ENCODE measurements at regions of chr17 and their contacts with region 1.

Region 1: DNA sequence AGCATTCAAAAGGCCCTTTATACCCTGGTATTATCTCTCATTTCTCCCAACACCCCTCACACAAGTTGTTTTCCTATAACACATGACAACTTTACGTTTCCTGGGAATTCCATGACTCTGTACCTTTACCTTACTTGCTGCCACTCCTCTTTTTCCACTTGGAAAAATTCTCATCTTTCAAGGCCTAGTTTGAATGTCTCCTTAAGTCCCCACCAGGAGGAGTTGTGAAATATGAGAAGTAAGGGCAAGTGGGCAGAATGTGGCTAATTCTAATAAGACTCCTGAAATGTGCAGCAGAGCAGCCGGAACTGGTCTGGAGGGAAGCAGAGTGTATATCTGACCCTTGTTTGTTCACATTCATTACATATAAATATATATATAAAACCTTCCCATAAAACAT is 39.7 kb downstream of the BRCA1 start:
- DNase-seq: no peak
- H3K4me3 ChIP-seq: no peak overlapping the region
- H3K27ac ChIP-seq: no peak overlapping the region
- H3K4me1 ChIP-seq: no peaks in the 10 kb centered on the region; a peak in 1 of 7 replicates
- H3K27me3 ChIP-seq: no peaks in the 10 kb centered on the region
- CTCF ChIP-seq: no peak
- EP300 ChIP-seq: no peak
- POLR2A ChIP-seq: no peak
- RAD21 ChIP-seq: no peak

Region 2: DNA sequence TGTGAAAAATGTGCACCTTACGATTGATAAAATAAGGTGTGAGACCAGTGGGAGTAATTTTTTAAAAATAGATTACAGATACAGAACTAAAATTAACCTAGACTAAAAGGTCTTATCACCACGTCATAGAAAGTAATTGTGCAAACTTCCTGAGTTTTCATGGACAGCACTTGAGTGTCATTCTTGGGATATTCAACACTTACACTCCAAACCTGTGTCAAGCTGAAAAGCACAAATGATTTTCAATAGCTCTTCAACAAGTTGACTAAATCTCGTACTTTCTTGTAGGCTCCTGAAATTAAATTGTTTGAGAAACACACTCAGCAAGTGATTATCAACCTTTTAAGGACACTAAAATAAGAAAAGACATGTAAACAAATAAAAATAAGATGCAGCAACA is 19.2 kb after region 1 on chr17:
- CTCF ChIA-PET with region 1: interaction called, 13 read pairs
- POLR2A ChIA-PET with region 1: interaction called, 3 read pairs
- DNase-seq: no peak
- H3K4me3 ChIP-seq: no peak overlapping the region
- H3K27ac ChIP-seq: no peak overlapping the region
- H3K4me1 ChIP-seq: no peaks in the 10 kb centered on the region
- H3K27me3 ChIP-seq: no peaks in the 10 kb centered on the region
- CTCF ChIP-seq: no peak
- EP300 ChIP-seq: no peak
- POLR2A ChIP-seq: no peak
- RAD21 ChIP-seq: no peak

Region 3: DNA sequence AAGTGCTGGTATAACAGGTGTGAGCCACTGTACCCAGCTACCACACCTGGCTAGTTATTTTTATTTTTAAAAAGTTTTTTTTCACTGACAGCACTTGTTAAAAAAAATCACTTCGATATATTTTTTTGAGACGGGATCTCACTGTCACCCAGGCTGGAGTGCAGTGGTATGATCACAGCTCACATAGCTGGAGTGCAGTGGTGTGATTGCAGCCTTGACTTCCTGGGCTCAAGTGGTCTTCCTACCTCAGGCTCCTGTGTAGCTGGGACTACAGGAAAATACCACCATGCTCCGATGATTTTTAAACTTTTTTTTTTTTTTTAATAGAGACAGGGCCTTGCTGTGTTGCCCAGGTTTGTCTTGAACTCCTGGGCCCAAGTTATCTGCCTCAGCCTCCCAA is 98.4 kb after region 1 on chr17:
- CTCF ChIA-PET with region 1: no interaction called
- POLR2A ChIA-PET with region 1: no interaction called
- DNase-seq: no peak
- H3K4me3 ChIP-seq: no peak overlapping the region
- H3K27ac ChIP-seq: no peak overlapping the region
- H3K4me1 ChIP-seq: no peaks in the 10 kb centered on the region
- H3K27me3 ChIP-seq: no peaks in the 10 kb centered on the region
- CTCF ChIP-seq: no peak
- EP300 ChIP-seq: no peak
- POLR2A ChIP-seq: no peak
- RAD21 ChIP-seq: no peak

Region 4: DNA sequence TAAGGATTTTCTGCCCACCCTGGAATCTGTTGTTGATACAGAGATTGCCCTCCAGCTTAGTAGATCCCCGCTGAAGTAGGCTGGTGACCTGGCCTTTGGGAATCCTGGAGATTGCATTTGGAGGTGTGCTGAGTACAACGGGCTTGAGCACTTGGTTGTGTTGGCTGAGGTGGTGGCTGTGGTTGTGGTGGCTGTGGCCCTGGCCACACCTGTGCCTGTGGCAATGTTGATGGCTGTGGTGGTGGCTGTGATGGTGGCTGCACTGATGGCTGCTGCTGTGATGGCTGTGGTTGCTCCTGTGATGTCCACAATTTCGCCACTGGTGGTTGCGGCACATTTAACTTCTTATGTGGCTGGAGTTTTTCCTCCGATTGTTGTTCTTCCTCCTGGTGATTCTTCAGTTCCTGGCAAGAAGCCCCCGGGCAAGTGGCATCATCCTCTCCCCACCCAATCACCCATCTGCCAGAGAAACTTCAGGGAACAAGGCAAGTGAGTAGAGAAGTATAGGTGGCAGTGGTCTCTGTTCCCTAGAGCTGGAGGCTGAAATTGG is 138.7 kb after region 1 on chr17:
- CTCF ChIA-PET with region 1: no interaction called
- POLR2A ChIA-PET with region 1: no interaction called
- DNase-seq: peak in 1 of 2 experiments; percentile 33
- H3K4me3 ChIP-seq: no peak overlapping the region
- H3K27ac ChIP-seq: no peak overlapping the region
- H3K4me1 ChIP-seq: no peaks in the 10 kb centered on the region
- H3K27me3 ChIP-seq: no peaks in the 10 kb centered on the region
- CTCF ChIP-seq: no peak
- EP300 ChIP-seq: no peak
- POLR2A ChIP-seq: no peak
- RAD21 ChIP-seq: no peak

Measured in H1 (cell line).